ENCODE measurements at regions of chr6 and their contacts with region 1.

Region 1: DNA sequence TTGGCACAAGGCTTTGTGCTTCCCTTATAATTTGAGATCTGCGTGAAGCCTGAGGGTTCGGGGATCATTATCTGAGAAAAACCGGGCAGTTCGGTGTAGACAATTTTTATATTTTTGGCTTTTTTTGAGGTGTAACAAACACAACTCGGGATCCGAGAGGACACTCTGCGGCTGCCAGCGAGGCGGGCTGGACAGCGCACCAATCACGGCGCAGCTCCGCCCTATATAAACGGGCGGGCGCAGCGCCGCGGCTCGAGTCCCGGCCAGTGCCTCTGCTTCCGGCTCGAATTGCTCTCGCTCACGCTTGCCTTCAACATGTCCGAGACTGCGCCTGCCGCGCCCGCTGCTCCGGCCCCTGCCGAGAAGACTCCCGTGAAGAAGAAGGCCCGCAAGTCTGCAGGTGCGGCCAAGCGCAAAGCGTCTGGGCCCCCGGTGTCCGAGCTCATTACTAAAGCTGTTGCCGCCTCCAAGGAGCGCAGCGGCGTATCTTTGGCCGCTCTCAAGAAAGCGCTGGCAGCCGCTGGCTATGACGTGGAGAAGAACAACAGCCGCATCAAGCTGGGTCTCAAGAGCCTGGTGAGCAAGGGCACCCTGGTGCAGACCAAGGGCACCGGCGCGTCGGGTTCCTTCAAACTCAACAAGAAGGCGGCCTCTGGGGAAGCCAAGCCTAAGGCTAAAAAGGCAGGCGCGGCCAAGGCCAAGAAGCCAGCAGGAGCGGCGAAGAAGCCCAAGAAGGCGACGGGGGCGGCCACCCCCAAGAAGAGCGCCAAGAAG is 69.0 kb downstream of the HFE start:
- DNase-seq: peak; percentile 91
- H3K4me3 Mint-ChIP-seq: peak overlapping the region; percentile 81
- H3K27ac Mint-ChIP-seq: peak overlapping the region; percentile 93
- H3K4me1 Mint-ChIP-seq: peaks cover 46% of the 10 kb centered on the region
- H3K27me3 Mint-ChIP-seq: peaks cover 24% of the 10 kb centered on the region

Region 2: DNA sequence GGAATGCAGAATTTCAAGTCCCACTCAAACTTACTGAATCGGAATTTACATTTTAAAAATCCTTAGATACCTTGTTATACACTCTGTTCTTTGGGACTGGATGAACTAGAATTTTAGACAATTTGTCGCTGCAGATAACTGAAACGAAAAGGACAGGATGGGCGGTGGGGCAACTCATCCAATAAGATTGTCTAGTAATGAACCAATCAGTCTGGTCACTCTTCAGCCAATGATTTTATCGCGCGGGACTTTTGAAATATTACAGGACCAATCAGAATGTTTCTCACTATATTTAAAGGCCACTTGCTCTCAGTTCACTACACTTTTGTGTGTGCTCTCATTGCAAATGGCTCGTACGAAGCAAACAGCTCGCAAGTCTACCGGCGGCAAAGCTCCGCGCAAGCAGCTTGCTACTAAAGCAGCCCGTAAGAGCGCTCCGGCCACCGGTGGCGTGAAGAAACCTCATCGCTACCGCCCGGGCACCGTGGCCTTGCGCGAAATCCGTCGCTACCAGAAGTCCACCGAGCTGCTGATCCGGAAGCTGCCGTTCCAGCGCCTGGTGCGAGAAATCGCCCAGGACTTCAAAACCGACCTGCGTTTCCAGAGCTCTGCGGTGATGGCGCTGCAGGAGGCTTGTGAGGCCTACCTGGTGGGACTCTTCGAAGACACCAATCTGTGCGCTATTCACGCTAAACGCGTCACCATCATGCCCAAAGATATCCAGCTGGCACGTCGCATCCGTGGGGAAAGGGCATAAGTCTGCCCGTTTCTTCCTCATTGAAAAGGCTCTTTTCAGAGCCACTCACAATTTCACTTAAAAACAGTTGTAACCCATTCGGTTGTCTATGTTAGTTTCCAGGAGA is 111.0 kb before region 1 on chr6:
- CTCF ChIA-PET with region 1: interaction called, 4 read pairs
- POLR2A ChIA-PET with region 1: interaction called, 93 read pairs
- intact Hi-C with region 1: loop called (anchors 1 kb)
- DNase-seq: peak; percentile 81
- H3K4me3 Mint-ChIP-seq: peak overlapping the region; percentile 81
- H3K27ac Mint-ChIP-seq: peak overlapping the region; percentile 97
- H3K4me1 Mint-ChIP-seq: peaks cover 17% of the 10 kb centered on the region
- H3K27me3 Mint-ChIP-seq: peaks cover 8% of the 10 kb centered on the region

Region 3: GRCh38 chr6:26136321-26136720 is 19.9 kb before region 1 on chr6:
- CTCF ChIA-PET with region 1: no interaction called
- POLR2A ChIA-PET with region 1: interaction called, 18 read pairs
- intact Hi-C with region 1: no loop called
- DNase-seq: no peak
- H3K4me3 Mint-ChIP-seq: no peak overlapping the region
- H3K27ac Mint-ChIP-seq: no peak overlapping the region
- H3K4me1 Mint-ChIP-seq: peaks cover 9% of the 10 kb centered on the region
- H3K27me3 Mint-ChIP-seq: no peaks in the 10 kb centered on the region

Region 4: GRCh38 chr6:26196846-26197648 is 40.8 kb after region 1 on chr6:
- CTCF ChIA-PET with region 1: interaction called, 3 read pairs
- POLR2A ChIA-PET with region 1: interaction called, 336 read pairs
- intact Hi-C with region 1: loop called (anchors 1 kb)
- DNase-seq: peak; percentile 84
- H3K4me3 Mint-ChIP-seq: peak overlapping the region; percentile 86
- H3K27ac Mint-ChIP-seq: peak overlapping the region; percentile 99
- H3K4me1 Mint-ChIP-seq: peaks cover 31% of the 10 kb centered on the region
- H3K27me3 Mint-ChIP-seq: peaks cover 3% of the 10 kb centered on the region

Region 5: DNA sequence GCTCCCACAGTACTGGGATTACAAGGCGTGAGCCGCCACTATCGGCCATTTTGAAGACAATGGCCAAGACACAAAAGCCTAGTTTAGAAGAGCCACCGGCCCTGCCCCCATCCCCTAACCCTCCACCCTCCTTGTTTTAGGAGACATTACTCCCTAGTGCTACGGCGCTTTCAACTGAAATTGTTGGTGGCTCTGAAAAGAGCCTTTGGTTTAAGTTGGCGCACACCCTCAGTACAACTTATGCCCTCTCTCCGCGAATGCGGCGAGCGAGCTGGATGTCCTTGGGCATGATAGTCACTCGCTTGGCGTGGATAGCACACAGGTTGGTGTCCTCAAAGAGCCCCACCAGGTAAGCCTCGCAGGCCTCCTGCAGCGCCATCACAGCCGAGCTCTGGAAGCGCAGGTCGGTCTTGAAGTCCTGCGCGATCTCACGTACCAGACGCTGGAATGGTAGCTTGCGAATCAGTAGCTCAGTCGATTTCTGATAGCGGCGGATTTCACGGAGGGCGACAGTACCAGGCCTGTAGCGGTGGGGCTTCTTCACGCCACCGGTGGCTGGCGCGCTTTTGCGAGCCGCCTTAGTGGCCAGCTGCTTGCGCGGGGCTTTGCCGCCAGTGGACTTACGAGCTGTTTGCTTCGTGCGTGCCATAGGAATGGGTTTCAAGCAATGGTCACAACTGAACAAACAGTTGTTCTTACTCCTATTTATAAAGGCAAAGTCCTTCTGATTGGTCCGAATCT is 93.9 kb after region 1 on chr6:
- CTCF ChIA-PET with region 1: no interaction called
- POLR2A ChIA-PET with region 1: interaction called, 61 read pairs
- intact Hi-C with region 1: no loop called
- DNase-seq: peak; percentile 84
- H3K4me3 Mint-ChIP-seq: peak overlapping the region; percentile 82
- H3K27ac Mint-ChIP-seq: peak overlapping the region; percentile 99
- H3K4me1 Mint-ChIP-seq: peaks cover 22% of the 10 kb centered on the region
- H3K27me3 Mint-ChIP-seq: no peaks in the 10 kb centered on the region

Region 6: GRCh38 chr6:27146706-27147505 is 990.6 kb after region 1 on chr6:
- CTCF ChIA-PET with region 1: no interaction called
- POLR2A ChIA-PET with region 1: interaction called, 25 read pairs
- intact Hi-C with region 1: loop called (anchors 1 kb)
- DNase-seq: peak; percentile 89
- H3K4me3 Mint-ChIP-seq: no peak overlapping the region
- H3K27ac Mint-ChIP-seq: no peak overlapping the region
- H3K4me1 Mint-ChIP-seq: peaks cover 21% of the 10 kb centered on the region
- H3K27me3 Mint-ChIP-seq: no peaks in the 10 kb centered on the region

Measured in activated CD4-positive, alpha-beta memory T cell treated with anti-CD3 and anti-CD28 coated beads for 36 hours (primary cell).